ENCODE measurements at regions of chr1 and their contacts with region 1.

Region 1: GRCh38 chr1:196160066-196160795 is 448.0 kb downstream of the KCNT2 start:
- DNase-seq: peak; percentile 92
- H3K4me3 ChIP-seq: no peak overlapping the region
- H3K27ac ChIP-seq: no peak overlapping the region
- H3K4me1 ChIP-seq: peaks cover 9% of the 10 kb centered on the region
- H3K27me3 ChIP-seq: no peaks in the 10 kb centered on the region
- CTCF ChIP-seq: no peak

Region 2: GRCh38 chr1:196180847-196181593 is 20.8 kb after region 1 on chr1:
- CTCF ChIA-PET with region 1: no interaction called
- dilution Hi-C with region 1: no loop called
- in situ Hi-C with region 1: no loop called
- intact Hi-C with region 1: loop called (anchors 2 kb)
- DNase-seq: peak; percentile 96
- H3K4me3 ChIP-seq: no peak overlapping the region
- H3K27ac ChIP-seq: no peak overlapping the region
- H3K4me1 ChIP-seq: peaks cover 17% of the 10 kb centered on the region
- H3K27me3 ChIP-seq: no peaks in the 10 kb centered on the region
- CTCF ChIP-seq: no peak

Region 3: DNA sequence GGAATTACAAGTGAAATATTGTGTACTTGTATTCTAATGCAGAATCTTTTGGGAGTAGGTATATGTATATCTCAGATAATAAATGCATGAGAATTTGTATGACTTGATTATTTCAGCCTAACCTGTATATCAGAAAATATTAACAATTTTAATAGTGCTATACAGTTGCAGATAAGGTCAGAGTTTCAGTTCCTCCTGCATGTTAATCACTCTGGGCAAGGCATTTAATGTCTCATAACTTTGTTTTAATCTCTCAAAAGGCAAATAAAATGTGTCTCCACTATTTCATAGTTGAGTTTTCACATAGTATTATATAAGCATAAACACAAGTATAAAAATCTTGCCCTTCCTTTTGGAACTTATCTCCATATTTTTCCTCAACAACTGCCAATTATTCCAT is 95.5 kb after region 1 on chr1:
- CTCF ChIA-PET with region 1: no interaction called
- dilution Hi-C with region 1: no loop called
- in situ Hi-C with region 1: no loop called
- intact Hi-C with region 1: no loop called
- DNase-seq: no peak
- H3K4me3 ChIP-seq: no peak overlapping the region
- H3K27ac ChIP-seq: no peak overlapping the region
- H3K4me1 ChIP-seq: no peaks in the 10 kb centered on the region
- H3K27me3 ChIP-seq: no peaks in the 10 kb centered on the region
- CTCF ChIP-seq: no peak

Region 4: GRCh38 chr1:196486346-196486745 is 326.1 kb after region 1 on chr1:
- CTCF ChIA-PET with region 1: interaction called, 11 read pairs
- dilution Hi-C with region 1: no loop called
- in situ Hi-C with region 1: no loop called
- intact Hi-C with region 1: no loop called
- DNase-seq: no peak
- H3K4me3 ChIP-seq: no peak overlapping the region
- H3K27ac ChIP-seq: no peak overlapping the region
- H3K4me1 ChIP-seq: no peaks in the 10 kb centered on the region
- H3K27me3 ChIP-seq: no peaks in the 10 kb centered on the region
- CTCF ChIP-seq: no peak

Region 5: DNA sequence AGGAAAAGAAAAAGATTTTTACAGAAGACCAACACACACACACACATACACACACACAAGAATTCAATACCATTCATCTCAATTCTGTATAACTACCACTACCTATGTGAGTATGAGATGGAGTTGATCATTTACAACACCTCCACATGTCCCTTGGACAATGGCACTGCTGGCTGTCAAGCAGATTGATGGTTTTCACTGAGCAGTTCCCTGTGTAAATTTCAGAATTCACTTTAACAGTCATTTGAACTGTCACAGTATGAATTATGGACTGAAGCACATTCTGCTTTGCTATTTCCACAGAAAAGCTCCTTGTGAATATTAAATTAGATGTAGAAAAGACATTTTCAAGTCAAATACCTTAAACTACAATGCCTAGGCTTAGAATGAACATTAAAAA is 433.7 kb after region 1 on chr1:
- CTCF ChIA-PET with region 1: no interaction called
- dilution Hi-C with region 1: no loop called
- in situ Hi-C with region 1: no loop called
- intact Hi-C with region 1: no loop called
- DNase-seq: no peak
- H3K4me3 ChIP-seq: no peak overlapping the region
- H3K27ac ChIP-seq: no peak overlapping the region
- H3K4me1 ChIP-seq: no peaks in the 10 kb centered on the region
- H3K27me3 ChIP-seq: no peaks in the 10 kb centered on the region
- CTCF ChIP-seq: no peak